Kidney (tissue), 22 donors: ENCODE measurements at regions of chr6 and their contacts with region 1.

Region 1: DNA sequence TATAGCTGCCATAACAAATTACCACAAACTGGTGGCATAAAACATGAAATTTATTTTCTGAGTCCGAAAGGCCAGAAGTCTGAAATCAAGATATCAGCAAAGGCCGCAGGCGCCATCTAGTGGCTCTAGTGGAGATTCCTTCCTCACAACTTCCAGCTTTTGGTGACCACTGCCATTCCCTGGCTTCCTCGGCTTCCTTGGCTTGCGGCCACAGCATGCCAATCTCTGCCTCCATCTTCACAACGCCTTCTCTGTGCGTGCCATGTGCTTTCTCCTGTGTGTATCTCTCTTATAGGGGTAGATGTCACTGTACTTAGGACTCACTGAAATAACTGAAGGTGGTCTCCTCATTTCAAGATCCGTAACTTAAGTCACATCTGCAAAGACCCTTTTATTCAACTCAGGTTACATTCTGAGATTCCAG is 5.4 kb upstream of the PLAGL1 start:
- DNase-seq: peak; percentile 76 to 93 (median 79)
- H3K4me3 ChIP-seq: no peak overlapping the region
- H3K27ac ChIP-seq: no peak overlapping the region
- H3K4me1 ChIP-seq: peaks cover 0 to 3% (median 0%) of the 10 kb centered on the region in 3 donors
- H3K27me3 ChIP-seq: no peaks in the 10 kb centered on the region
- CTCF ChIP-seq: peak; percentile 83

Region 2: GRCh38 chr6:143575440-143575839 is 438.1 kb before region 1 on chr6:
- intact Hi-C with region 1: loop called (anchors 10 kb)
- DNase-seq: peak in 4 of 5 donors; percentile 58 to 89 (median 73)
- H3K4me3 ChIP-seq: no peak overlapping the region
- H3K27ac ChIP-seq: no peak overlapping the region
- H3K4me1 ChIP-seq: no peaks in the 10 kb centered on the region
- H3K27me3 ChIP-seq: no peaks in the 10 kb centered on the region
- CTCF ChIP-seq: peak; percentile 85